A549 (cell line): ENCODE measurements at regions of chr5 and their contacts with region 1.

Region 1: DNA sequence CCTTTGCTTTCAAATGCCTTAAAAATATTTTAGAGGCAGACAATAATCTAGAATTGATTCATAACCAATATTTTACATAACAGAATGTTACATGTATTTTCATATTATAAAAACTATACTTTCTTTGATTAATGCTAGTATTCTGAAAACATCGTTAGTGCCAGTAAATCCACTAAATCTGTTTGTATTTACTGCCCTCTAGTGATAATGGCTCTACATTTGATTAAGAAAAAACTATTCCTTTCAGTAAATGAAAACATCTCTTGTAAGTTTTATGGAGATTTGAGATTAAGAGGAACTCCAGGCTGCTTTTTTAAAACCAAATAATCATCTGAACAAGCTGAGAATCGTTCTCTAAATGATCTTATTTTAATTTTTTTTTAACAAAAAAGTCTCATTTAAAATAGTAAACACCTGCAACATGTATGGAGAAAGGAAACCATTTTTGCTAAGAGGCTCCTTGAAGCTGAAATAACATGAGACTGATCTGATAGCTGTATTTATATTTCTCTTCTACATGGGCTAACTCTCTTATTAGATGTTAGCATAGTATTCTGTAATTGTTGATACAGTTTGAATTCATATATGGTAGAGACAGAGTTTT is 424.7 kb downstream of the RAB3C start:
- DNase-seq: no peak
- ATAC-seq: no peak
- H3K4me3 ChIP-seq: no peak overlapping the region
- H3K27ac ChIP-seq: peak overlapping the region; percentile 42 to 50; a peak in 4 of 6 replicates
- H3K4me1 ChIP-seq: peaks cover 71% of the 10 kb centered on the region
- CTCF ChIP-seq: peak; percentile 49
- EP300 ChIP-seq: no peak
- POLR2A ChIP-seq: no peak
- RAD21 ChIP-seq: peak; percentile 54 to 56; a peak in 4 of 5 replicates

Region 2: DNA sequence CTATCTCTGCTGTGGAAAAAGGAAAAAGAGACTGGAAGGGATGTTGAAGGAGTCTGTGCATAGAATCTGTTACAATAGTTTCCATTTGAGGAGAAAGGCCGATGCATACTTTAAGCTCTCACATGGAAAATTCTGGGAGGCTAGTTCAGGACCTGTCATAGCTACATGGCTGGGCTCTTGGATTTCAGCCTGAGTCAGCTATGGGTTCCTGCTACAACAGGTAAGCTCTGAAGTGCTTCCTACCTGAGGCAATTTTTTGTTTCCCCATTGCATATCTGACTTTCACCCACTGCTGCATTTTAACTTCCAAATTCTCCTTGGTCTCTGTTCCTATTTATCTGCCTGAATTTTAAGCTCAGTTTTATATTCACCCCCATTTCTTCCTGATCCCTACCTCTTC is 114.0 kb before region 1 on chr5:
- CTCF ChIA-PET with region 1: interaction called, 13 read pairs
- POLR2A ChIA-PET with region 1: interaction called, 3 read pairs
- DNase-seq: no peak
- ATAC-seq: no peak
- H3K4me3 ChIP-seq: no peak overlapping the region
- H3K27ac ChIP-seq: peak overlapping the region; percentile 94 to 100
- H3K4me1 ChIP-seq: peaks cover 68% of the 10 kb centered on the region
- CTCF ChIP-seq: no peak
- EP300 ChIP-seq: no peak
- POLR2A ChIP-seq: no peak
- RAD21 ChIP-seq: no peak